ENCODE measurements at regions of chr18 and their contacts with region 1.

Region 1: DNA sequence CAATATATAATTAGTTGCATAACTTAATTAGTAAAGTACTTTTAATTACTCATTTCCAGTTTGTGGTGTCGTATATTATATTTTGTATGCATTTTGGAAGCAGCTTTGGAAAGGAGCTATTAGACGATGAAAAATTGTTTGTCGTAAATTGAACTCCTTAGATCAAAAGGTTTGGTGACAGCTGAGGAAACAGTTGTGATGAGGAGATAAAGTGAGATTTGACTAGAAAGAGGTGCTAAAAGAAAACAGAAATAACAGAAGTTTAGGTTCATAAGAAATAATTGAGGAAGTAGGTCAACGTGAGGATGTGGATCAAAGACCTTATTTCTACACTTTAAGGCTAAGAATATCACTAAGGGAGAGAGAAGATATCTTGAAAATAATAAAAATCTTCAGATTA is 141.9 kb upstream of the NETO1 start:
- DNase-seq: no peak
- ATAC-seq: no peak
- H3K4me3 ChIP-seq: no peak overlapping the region
- H3K27ac ChIP-seq: no peak overlapping the region
- H3K4me1 ChIP-seq: no peaks in the 10 kb centered on the region
- H3K27me3 ChIP-seq: no peaks in the 10 kb centered on the region
- CTCF ChIP-seq: no peak

Region 2: GRCh38 chr18:72899338-72899737 is 110.4 kb before region 1 on chr18:
- intact Hi-C with region 1: no loop called
- DNase-seq: no peak
- ATAC-seq: peak in 1 of 4 donors; percentile 43
- H3K4me3 ChIP-seq: no peak overlapping the region
- H3K27ac ChIP-seq: no peak overlapping the region
- H3K4me1 ChIP-seq: no peaks in the 10 kb centered on the region
- H3K27me3 ChIP-seq: no peaks in the 10 kb centered on the region
- CTCF ChIP-seq: no peak

Region 3: GRCh38 chr18:72940986-72941385 is 68.7 kb before region 1 on chr18:
- intact Hi-C with region 1: no loop called
- DNase-seq: no peak
- ATAC-seq: no peak
- H3K4me3 ChIP-seq: no peak overlapping the region
- H3K27ac ChIP-seq: no peak overlapping the region
- H3K4me1 ChIP-seq: no peaks in the 10 kb centered on the region
- H3K27me3 ChIP-seq: no peaks in the 10 kb centered on the region
- CTCF ChIP-seq: no peak

Region 4: DNA sequence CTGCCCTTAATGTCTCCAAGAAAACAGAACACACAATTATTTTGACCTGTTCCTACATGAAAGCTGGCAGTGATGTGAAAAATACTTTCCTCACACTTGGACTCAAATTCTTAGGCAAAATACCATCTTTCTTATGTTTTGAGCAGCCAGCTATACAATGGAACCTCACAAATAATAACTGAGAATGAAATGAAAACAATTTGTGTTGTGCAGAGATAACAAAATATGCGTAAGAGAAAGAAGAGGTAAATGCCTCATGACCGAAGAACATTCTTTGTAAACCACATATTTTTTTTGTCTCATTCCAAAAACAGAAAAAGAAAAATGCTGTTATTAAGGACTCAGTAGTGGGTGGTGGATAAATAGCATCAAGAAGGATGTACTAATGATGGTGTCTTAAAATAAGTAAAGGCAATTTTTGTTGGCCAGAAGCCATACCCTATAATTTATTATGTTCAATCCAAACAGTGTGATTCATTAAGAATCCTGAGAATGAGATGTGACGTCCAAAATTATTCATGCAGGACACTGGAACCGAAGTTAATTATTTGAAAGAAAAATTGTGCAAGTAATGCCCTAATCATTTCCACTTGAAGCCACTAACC is 51.1 kb after region 1 on chr18:
- intact Hi-C with region 1: no loop called
- DNase-seq: no peak
- ATAC-seq: no peak
- H3K4me3 ChIP-seq: no peak overlapping the region
- H3K27ac ChIP-seq: no peak overlapping the region
- H3K4me1 ChIP-seq: no peaks in the 10 kb centered on the region
- H3K27me3 ChIP-seq: no peaks in the 10 kb centered on the region
- CTCF ChIP-seq: no peak

Region 5: DNA sequence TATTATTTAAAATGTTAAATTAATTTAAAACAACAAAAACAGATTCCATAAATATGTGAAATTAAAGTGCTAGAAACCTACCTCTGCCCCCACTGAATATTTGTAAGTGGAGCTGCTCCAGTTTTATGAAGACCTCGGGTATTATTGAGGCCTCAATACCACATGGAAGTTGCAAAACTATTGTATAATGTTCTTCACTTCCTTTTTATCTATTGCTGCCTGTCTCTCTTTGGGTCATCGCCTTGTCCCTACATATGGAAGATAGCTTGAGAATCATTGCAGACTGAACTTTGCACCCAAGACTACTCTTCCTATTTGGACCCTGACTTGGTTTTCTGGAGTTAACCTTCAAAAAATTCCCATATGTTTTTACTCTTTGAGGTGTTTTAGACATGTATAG is 70.2 kb after region 1 on chr18:
- intact Hi-C with region 1: loop called in 1 of 3 experiments (anchors 10 kb)
- DNase-seq: no peak
- ATAC-seq: no peak
- H3K4me3 ChIP-seq: no peak overlapping the region
- H3K27ac ChIP-seq: no peak overlapping the region
- H3K4me1 ChIP-seq: no peaks in the 10 kb centered on the region
- H3K27me3 ChIP-seq: no peaks in the 10 kb centered on the region
- CTCF ChIP-seq: no peak

Measured in pancreas (tissue), 10 donors.